ENCODE measurements at regions of chr1 and their contacts with region 1.

Region 1: DNA sequence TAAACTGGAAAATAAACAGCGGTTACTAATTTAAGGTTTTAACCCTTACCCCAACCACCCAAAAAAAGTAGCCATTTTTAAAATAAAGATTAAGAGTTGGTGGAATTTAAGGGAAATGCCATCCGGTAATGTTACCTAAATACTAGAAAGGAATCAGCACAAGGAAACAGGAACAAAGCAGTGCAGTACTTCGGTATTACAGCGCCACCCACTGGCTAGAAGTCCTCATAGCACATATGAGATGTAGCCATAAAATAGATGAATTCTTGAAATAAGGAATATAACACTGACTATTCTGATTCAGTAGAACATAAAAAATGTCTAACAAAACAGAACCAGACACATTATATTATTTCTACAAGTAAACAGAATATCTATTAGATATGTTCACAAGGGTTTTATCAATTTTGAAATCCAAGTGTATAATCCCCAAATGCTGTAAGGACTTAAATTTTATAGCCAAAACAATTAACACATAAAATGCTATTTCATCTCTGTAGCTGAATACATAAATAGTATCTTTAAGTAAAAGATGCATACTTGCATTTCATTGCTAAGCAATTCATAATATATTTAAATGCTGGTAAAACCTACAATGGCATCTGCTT is 58.8 kb downstream of the FRRS1 start:
- DNase-seq: peak; percentile 46
- ATAC-seq: peak; percentile 62; the same call in 1 of the 2 replicates
- H3K4me3 ChIP-seq: no peak overlapping the region
- H3K27ac ChIP-seq: no peak overlapping the region
- H3K4me1 ChIP-seq: no peaks in the 10 kb centered on the region
- H3K27me3 ChIP-seq: no peaks in the 10 kb centered on the region
- CTCF ChIP-seq: peak; percentile 72; the same call in 1 of the 2 replicates

Region 2: GRCh38 chr1:98030483-98030882 is 1677.2 kb before region 1 on chr1:
- CTCF ChIA-PET with region 1: no interaction called
- POLR2A ChIA-PET with region 1: no interaction called
- in situ Hi-C with region 1: no loop called
- intact Hi-C with region 1: no loop called
- DNase-seq: no peak
- ATAC-seq: no peak; the same call in 1 of the 2 replicates
- H3K4me3 ChIP-seq: no peak overlapping the region
- H3K27ac ChIP-seq: no peak overlapping the region
- H3K4me1 ChIP-seq: no peaks in the 10 kb centered on the region; the same call in 1 of the 2 replicates
- H3K27me3 ChIP-seq: no peaks in the 10 kb centered on the region
- CTCF ChIP-seq: no peak

Region 3: GRCh38 chr1:98794196-98794886 is 913.3 kb before region 1 on chr1:
- CTCF ChIA-PET with region 1: no interaction called
- POLR2A ChIA-PET with region 1: no interaction called
- in situ Hi-C with region 1: no loop called
- intact Hi-C with region 1: loop called (anchors 10 kb)
- DNase-seq: peak; percentile 30
- ATAC-seq: peak; percentile 80
- H3K4me3 ChIP-seq: no peak overlapping the region
- H3K27ac ChIP-seq: no peak overlapping the region
- H3K4me1 ChIP-seq: no peaks in the 10 kb centered on the region
- H3K27me3 ChIP-seq: no peaks in the 10 kb centered on the region
- CTCF ChIP-seq: peak; percentile 75

Region 4: DNA sequence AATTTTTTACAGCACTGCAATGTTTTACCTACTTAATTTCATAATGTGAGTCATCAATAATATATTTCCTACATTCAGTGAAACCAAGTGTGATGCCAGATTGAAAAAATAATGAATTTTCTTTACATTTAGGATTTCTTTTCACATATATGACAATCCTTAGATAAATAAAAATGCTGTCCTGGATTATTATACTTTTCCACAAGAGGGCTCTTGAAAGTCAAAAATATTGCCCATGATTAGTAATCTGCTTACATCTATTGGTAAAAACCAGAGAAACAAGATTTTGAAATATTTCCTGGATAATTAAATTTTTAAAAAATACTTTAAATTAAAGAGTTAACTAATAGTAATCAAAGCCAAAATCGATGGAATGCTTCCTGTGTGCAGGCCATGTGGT is 530.2 kb before region 1 on chr1:
- CTCF ChIA-PET with region 1: no interaction called
- POLR2A ChIA-PET with region 1: no interaction called
- in situ Hi-C with region 1: no loop called
- intact Hi-C with region 1: loop called (anchors 5 kb)
- DNase-seq: no peak
- ATAC-seq: no peak
- H3K4me3 ChIP-seq: no peak overlapping the region
- H3K27ac ChIP-seq: no peak overlapping the region
- H3K4me1 ChIP-seq: no peaks in the 10 kb centered on the region
- H3K27me3 ChIP-seq: no peaks in the 10 kb centered on the region
- CTCF ChIP-seq: no peak; the same call in 1 of the 2 replicates

Region 5: DNA sequence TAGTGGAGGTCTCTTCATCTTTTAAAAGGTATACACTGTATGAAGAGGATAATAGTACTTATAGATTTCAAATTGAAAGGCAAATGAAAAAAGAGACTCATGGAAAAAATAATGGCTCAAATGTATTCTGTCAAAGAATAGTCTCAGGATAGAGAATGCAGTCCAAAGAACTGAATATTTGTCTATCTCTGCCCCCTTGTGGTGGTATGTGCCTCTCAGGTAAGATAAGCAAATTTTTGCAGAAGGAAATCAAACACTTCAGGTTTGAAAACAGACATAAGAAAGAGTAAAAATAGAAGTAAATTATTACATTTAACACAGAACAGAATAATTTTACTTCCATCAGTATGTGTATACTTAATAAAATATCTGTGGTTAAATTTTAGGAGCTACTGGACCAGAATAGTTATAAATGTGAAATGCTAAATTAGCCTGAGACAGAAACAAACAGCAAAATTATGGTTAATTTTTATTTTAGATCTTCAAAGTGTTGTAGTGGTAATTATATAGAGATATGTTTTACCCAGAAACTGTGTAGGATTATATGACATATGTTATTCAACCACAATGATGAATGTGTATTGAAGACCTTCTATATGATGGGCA is 226.1 kb before region 1 on chr1:
- CTCF ChIA-PET with region 1: no interaction called
- POLR2A ChIA-PET with region 1: no interaction called
- in situ Hi-C with region 1: no loop called
- intact Hi-C with region 1: loop called (anchors 10 kb)
- DNase-seq: no peak
- ATAC-seq: no peak
- H3K4me3 ChIP-seq: no peak overlapping the region
- H3K27ac ChIP-seq: no peak overlapping the region
- H3K4me1 ChIP-seq: no peaks in the 10 kb centered on the region
- H3K27me3 ChIP-seq: no peaks in the 10 kb centered on the region
- CTCF ChIP-seq: peak; percentile 52; the same call in 1 of the 2 replicates

Region 6: GRCh38 chr1:101257500-101258325 is 1550.1 kb after region 1 on chr1:
- CTCF ChIA-PET with region 1: no interaction called
- POLR2A ChIA-PET with region 1: interaction called, 18 read pairs
- in situ Hi-C with region 1: no loop called
- intact Hi-C with region 1: no loop called
- DNase-seq: no peak
- ATAC-seq: no peak
- H3K4me3 ChIP-seq: no peak overlapping the region
- H3K27ac ChIP-seq: no peak overlapping the region
- H3K4me1 ChIP-seq: no peaks in the 10 kb centered on the region
- H3K27me3 ChIP-seq: no peaks in the 10 kb centered on the region
- CTCF ChIP-seq: no peak